MCF 10A (cell line): ENCODE measurements at regions of chr20 and their contacts with region 1.

Region 1: GRCh38 chr20:10673988-10674711 is at the start of gene JAG1:
- DNase-seq: peak; percentile 95
- H3K4me3 Mint-ChIP-seq: peak within 1 kb of the TSS; percentile 98
- H3K27ac Mint-ChIP-seq: peak within 1 kb of the TSS; percentile 91
- H3K4me1 Mint-ChIP-seq: peaks cover 29% of the 10 kb centered on the region
- H3K27me3 Mint-ChIP-seq: no peaks in the 10 kb centered on the region
- CTCF ChIP-seq: no peak
- total RNA-seq, gene JAG1: 62.5 and 88.0 TPM in 2 replicates

Region 2: DNA sequence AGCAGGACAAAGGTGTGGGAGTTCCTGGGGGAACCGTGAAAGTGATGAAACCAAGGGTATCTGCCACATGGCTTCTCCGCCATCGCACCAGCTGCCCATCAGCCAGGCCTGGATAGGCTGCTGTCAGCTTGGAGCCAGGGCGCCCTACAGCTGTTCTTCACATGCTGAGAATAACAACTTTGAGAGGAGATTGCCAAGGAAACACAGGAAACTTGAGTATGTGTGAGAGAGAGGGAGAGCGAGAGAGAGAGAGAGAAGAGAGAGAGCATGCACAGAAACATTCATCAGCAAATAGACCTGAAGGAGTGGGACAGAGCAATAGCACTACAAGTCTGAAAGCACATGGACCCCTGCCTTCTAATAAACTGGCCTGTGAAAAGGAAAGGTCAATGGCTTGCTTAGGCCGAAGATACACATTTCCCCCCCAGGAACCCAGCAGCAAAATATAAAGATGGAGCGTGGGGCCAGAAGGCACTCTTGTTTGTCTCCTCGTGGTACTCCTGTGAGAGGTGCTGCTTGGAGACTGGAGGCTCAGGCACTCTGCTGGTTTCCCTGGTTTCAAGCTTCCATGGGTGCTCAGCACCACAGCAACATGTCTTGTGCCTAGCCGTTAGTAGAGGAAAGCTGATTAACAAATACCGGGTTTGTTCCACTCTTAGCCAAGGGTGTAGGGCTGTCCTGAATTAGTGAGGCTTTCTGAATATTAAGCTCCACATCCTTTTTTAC is 402.5 kb before region 1 on chr20:
- CTCF ChIA-PET with region 1: no interaction called
- POLR2A ChIA-PET with region 1: no interaction called
- intact Hi-C with region 1: no loop called
- DNase-seq: no peak
- H3K4me3 Mint-ChIP-seq: no peak overlapping the region
- H3K27ac Mint-ChIP-seq: no peak overlapping the region
- H3K4me1 Mint-ChIP-seq: no peaks in the 10 kb centered on the region
- H3K27me3 Mint-ChIP-seq: peaks cover 11% of the 10 kb centered on the region
- CTCF ChIP-seq: no peak

Region 3: DNA sequence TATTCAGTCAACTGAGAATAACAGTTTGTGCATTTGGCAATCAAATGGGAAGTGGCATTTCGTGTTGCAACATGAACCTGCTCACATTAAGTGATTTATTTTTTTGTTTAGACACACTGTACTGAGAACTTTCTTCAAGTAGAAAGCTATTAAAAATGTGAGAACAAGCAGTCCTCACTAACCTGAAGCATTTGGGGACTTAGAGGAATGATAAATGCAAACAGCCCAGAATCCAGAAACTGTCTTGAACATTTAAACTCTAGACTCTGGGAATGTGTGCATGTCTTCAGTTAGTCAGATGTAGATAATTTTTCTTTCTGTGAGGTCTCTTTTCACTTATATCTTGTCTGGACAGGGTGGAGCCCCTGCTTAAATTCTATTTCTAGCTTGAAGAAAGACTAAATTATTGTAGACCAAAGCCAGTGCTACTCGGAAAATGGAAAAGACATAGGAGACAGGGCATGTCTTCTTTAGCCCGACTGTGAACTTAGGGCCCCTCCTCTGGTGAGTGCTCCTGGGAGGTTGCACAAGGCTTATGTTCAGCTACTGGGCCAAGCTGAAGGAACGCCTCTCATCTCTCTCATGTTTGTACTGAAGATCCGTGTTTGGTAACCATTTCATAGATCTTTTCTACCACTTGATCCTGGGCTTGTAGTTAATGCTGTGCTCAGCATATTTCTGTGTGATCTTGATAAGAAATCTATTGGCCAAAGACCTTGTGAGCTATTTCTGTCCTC is 169.0 kb before region 1 on chr20:
- CTCF ChIA-PET with region 1: interaction called, 5 read pairs
- POLR2A ChIA-PET with region 1: interaction called, 39 read pairs
- intact Hi-C with region 1: no loop called
- DNase-seq: peak; percentile 74
- H3K4me3 Mint-ChIP-seq: peak overlapping the region; percentile 52
- H3K27ac Mint-ChIP-seq: peak overlapping the region; percentile 89
- H3K4me1 Mint-ChIP-seq: peaks cover 67% of the 10 kb centered on the region
- H3K27me3 Mint-ChIP-seq: no peaks in the 10 kb centered on the region
- CTCF ChIP-seq: no peak

Region 4: GRCh38 chr20:10619427-10619826 is 54.7 kb before region 1 on chr20:
- CTCF ChIA-PET with region 1: interaction called, 3 read pairs
- POLR2A ChIA-PET with region 1: interaction called, 11 read pairs
- intact Hi-C with region 1: no loop called
- DNase-seq: peak; percentile 92
- H3K4me3 Mint-ChIP-seq: peak overlapping the region; percentile 13
- H3K27ac Mint-ChIP-seq: peak overlapping the region; percentile 90
- H3K4me1 Mint-ChIP-seq: peaks cover 18% of the 10 kb centered on the region
- H3K27me3 Mint-ChIP-seq: no peaks in the 10 kb centered on the region
- CTCF ChIP-seq: no peak

Region 5: DNA sequence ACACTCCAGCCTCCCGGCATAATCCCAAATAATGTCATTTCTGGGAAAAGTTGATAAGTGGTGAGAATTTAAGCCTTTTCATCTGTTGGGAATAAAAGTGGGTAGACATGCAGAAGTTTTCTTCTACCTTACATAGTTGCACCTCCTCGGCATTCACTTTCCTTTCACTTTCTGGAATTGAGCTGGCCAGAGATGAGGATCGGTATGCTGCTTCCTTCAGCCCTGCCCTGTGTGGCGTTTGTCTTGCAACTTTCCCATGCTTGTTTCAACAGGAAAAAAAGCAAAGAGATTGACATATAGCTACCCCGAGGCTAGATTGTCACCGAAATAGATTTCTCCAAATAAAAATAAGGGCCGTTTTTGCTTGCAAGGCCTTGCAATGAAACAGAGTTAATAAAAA is 65.4 kb after region 1 on chr20:
- CTCF ChIA-PET with region 1: interaction called, 14 read pairs
- POLR2A ChIA-PET with region 1: interaction called, 28 read pairs
- intact Hi-C with region 1: no loop called
- DNase-seq: peak; percentile 56
- H3K4me3 Mint-ChIP-seq: peak overlapping the region; percentile 67
- H3K27ac Mint-ChIP-seq: peak overlapping the region; percentile 81
- H3K4me1 Mint-ChIP-seq: peaks cover 6% of the 10 kb centered on the region
- H3K27me3 Mint-ChIP-seq: no peaks in the 10 kb centered on the region
- CTCF ChIP-seq: no peak

Region 6: DNA sequence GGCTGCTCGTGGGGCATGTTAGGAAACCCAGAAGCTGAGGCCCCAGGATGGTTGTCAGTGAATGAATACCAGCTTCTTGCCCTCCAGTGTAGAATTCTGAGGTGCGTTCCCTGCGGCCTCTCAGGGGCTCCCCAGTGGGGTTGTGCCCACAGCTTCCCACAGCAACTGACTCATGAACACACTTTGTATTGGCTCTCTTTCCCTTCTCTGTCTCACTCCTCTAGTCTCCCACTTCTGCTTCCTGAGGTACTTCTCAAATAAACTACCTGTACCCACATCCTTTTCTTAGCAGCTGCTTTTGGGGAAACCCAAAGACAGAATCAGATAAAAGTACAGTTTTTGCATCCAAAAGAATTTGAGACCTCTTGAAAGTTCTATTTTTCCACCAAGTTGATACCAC is 107.4 kb after region 1 on chr20:
- CTCF ChIA-PET with region 1: no interaction called
- POLR2A ChIA-PET with region 1: no interaction called
- intact Hi-C with region 1: no loop called
- DNase-seq: no peak
- H3K4me3 Mint-ChIP-seq: no peak overlapping the region
- H3K27ac Mint-ChIP-seq: no peak overlapping the region
- H3K4me1 Mint-ChIP-seq: peaks cover 6% of the 10 kb centered on the region
- H3K27me3 Mint-ChIP-seq: no peaks in the 10 kb centered on the region
- CTCF ChIP-seq: no peak

Region 7: DNA sequence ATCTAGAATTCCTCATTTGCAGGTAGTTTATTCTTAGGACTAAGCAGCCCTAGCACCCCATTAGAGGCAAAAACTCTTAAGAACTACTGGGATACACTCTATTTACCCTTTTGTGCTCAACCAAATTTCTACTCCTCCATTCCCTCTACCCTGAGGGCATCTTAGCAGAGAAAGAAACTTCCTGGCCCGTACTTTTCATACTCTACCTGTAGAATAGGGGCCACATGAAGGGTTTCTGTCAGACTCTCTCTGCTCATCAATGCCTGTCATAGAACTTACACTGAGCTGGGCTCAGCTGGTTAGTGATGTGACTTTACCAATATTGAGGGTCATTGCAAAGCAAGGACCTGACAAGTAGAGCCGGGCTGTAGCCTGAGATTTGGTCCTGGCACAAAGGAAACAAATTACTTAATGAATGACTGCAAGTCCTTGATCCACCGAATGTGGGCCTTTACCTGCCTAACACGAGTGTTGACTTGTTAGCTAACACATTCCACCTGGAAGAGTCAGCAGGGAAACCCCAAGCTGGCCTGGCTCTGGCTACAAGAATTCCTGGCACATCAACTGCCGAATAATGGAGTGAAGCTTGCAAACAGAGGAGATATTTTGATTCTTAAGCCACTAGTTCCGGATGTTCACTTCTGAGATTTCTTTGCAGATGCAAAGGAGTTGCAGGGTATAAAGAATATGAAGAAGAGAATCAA is 280.1 kb after region 1 on chr20:
- CTCF ChIA-PET with region 1: interaction called, 4 read pairs
- POLR2A ChIA-PET with region 1: interaction called, 53 read pairs
- intact Hi-C with region 1: no loop called
- DNase-seq: peak; percentile 92
- H3K4me3 Mint-ChIP-seq: no peak overlapping the region
- H3K27ac Mint-ChIP-seq: peak overlapping the region; percentile 91
- H3K4me1 Mint-ChIP-seq: peaks cover 19% of the 10 kb centered on the region
- H3K27me3 Mint-ChIP-seq: no peaks in the 10 kb centered on the region
- CTCF ChIP-seq: no peak

Region 8: DNA sequence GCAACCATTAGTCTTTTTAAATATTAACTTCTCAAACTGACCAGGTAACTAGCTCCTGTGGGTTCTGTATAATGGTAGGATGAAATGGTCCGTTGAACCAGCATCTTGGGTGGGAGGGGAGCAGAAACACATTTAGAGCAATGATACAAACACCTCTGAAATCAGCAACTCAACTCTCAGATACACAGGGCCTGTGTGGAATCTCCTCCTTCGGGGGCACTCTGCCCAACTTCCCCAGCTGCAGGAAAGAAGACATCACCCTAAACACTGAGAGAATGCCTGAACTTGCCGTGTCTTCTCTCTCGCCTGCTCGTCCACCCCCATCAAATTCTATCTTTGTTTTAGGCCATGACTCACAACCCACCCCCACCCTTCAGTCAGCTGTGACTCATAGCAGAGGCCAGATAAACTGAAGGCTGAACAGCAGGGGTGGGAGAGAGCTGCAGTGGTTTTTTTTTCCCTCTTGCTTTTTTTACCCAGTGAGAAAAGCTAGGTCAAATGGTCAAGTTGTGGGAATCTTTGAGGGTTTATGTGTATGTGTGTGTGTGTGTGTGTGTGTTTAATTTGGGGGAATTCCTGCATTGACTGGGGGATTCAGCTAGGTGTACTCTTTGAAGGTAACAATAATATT is 593.1 kb after region 1 on chr20:
- CTCF ChIA-PET with region 1: interaction called, 26 read pairs
- POLR2A ChIA-PET with region 1: interaction called, 58 read pairs
- intact Hi-C with region 1: loop called (anchors 1 kb)
- DNase-seq: peak; percentile 95
- H3K4me3 Mint-ChIP-seq: peak overlapping the region; percentile 8
- H3K27ac Mint-ChIP-seq: peak overlapping the region; percentile 76
- H3K4me1 Mint-ChIP-seq: peaks cover 21% of the 10 kb centered on the region
- H3K27me3 Mint-ChIP-seq: no peaks in the 10 kb centered on the region
- CTCF ChIP-seq: no peak